ENCODE measurements at regions of chr17 and their contacts with region 1.

Region 1: GRCh38 chr17:47188876-47189731 is at the start of gene CDC27:
- DNase-seq: peak; percentile 100
- ATAC-seq: peak; percentile 90
- H3K4me3 ChIP-seq: peak within 1 kb of the TSS; percentile 74 to 99 (median 88)
- H3K4me3 Mint-ChIP-seq: peak within 1 kb of the TSS; percentile 96
- H3K27ac ChIP-seq: peak within 1 kb of the TSS; percentile 92 to 95
- H3K27ac Mint-ChIP-seq: peak within 1 kb of the TSS; percentile 95
- H3K4me1 ChIP-seq: peaks cover 21 to 30% of the 10 kb centered on the region in 2 donors
- H3K4me1 Mint-ChIP-seq: peaks cover 53% of the 10 kb centered on the region
- H3K27me3 ChIP-seq: no peaks in the 10 kb centered on the region
- H3K27me3 Mint-ChIP-seq: no peaks in the 10 kb centered on the region
- CTCF ChIP-seq: no peak
- total RNA-seq, gene CDC27: 86.5 and 90.7 TPM in 2 replicates

Region 2: DNA sequence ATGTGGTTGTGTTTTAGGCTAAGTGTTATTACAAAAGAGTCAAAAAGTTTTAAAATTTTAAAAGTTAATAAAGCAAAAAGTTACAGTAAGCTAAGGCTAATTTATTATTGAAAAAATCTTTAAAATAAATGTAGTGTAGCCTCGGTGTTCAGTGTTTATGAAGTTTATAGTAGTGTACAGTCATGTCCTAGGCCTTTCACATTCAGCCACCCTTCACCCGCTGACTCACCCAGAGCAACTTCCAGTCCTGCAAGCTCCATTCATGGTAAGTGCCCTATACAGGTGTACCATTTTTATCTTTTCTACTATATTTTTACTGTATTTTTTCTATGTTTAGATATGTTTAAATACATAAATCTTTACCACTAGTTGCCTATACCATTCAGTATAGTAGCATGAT is 111.5 kb before region 1 on chr17:
- CTCF ChIA-PET with region 1: no interaction called
- POLR2A ChIA-PET with region 1: no interaction called
- intact Hi-C with region 1: no loop called
- DNase-seq: no peak
- ATAC-seq: no peak
- H3K4me3 ChIP-seq: no peak overlapping the region
- H3K4me3 Mint-ChIP-seq: no peak overlapping the region
- H3K27ac ChIP-seq: no peak overlapping the region
- H3K27ac Mint-ChIP-seq: no peak overlapping the region
- H3K4me1 ChIP-seq: peaks cover 0 to 3% of the 10 kb centered on the region in 2 donors
- H3K4me1 Mint-ChIP-seq: peaks cover 7% of the 10 kb centered on the region
- H3K27me3 ChIP-seq: no peaks in the 10 kb centered on the region
- H3K27me3 Mint-ChIP-seq: no peaks in the 10 kb centered on the region
- CTCF ChIP-seq: no peak

Region 3: DNA sequence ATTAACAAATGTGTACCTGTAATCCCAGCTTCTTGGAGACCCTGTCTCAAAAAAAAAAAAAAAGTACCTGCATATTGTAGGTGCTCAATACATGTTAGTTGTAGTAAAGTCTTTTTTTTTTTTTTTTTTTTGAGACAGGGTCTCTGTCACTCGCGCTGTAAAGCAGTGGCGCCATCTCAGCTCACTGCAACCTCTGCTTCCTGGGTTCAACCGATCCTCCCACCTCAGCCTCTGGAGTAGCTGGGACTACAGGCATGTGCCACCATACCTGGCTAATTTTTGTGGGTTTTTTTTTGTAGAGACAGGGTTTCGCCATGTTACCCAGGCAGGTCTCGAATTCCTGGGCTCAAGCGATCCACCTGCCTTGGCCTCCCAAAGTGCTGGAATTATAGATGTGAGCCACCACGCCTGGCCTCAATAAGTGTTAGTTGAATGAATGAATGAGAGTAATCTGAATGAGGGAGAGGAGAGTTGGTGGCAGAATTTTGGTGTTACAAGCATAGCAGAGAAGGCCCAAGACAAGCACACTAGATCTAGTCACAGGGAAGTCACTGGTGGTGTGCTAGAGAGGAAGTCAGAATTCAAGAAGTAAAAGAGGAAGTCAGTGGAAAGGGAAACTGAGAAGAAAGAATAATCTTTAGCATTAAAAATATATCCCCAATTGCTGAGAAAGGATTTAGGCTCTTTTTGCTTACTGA is 10.7 kb after region 1 on chr17:
- CTCF ChIA-PET with region 1: interaction called, 10 read pairs
- POLR2A ChIA-PET with region 1: interaction called, 6 read pairs
- intact Hi-C with region 1: loop called (anchors 1 kb)
- DNase-seq: peak; percentile 79
- ATAC-seq: peak; percentile 67
- H3K4me3 ChIP-seq: peak overlapping the region; percentile 21 to 45 (median 41)
- H3K4me3 Mint-ChIP-seq: peak overlapping the region; percentile 80
- H3K27ac ChIP-seq: peak overlapping the region; percentile 82 to 90
- H3K27ac Mint-ChIP-seq: peak overlapping the region; percentile 96
- H3K4me1 ChIP-seq: peaks cover 40 to 46% of the 10 kb centered on the region in 2 donors
- H3K4me1 Mint-ChIP-seq: peaks cover 42% of the 10 kb centered on the region
- H3K27me3 ChIP-seq: no peaks in the 10 kb centered on the region
- H3K27me3 Mint-ChIP-seq: no peaks in the 10 kb centered on the region
- CTCF ChIP-seq: no peak

Region 4: DNA sequence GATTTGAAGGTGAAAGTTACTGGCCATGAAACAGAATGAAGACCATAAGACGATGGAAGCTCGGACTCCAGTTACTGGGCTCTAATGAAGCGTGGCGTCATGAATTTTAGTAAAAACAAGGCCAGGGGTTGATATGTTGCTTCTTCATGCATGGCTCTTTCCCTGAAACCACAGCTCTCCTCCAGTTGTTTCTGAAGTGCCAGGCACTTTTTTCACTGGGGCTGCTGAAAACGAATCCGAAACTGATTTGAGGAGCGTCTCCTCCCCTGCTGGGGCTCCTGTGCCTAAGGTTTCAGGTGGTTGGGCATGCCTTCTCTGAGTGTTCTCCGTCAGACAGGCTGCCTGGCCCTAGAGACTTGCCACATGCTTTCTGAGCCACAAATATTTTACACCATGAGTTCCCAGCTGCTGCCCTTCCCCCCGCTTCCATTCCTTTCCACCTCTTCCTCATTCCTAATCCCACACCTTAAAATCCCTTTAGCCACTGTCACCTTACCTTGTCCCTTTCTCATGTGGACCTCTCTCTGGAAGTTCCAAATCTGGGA is 16.4 kb after region 1 on chr17:
- CTCF ChIA-PET with region 1: interaction called, 10 read pairs
- POLR2A ChIA-PET with region 1: interaction called, 6 read pairs
- intact Hi-C with region 1: loop called (anchors 1 kb)
- DNase-seq: peak; percentile 87
- ATAC-seq: peak; percentile 69
- H3K4me3 ChIP-seq: peak overlapping the region; percentile 30 to 56 (median 45)
- H3K4me3 Mint-ChIP-seq: peak overlapping the region; percentile 87
- H3K27ac ChIP-seq: peak overlapping the region; percentile 96 to 97
- H3K27ac Mint-ChIP-seq: peak overlapping the region; percentile 99
- H3K4me1 ChIP-seq: peaks cover 67 to 74% of the 10 kb centered on the region in 2 donors
- H3K4me1 Mint-ChIP-seq: peaks cover 73% of the 10 kb centered on the region
- H3K27me3 ChIP-seq: no peaks in the 10 kb centered on the region
- H3K27me3 Mint-ChIP-seq: no peaks in the 10 kb centered on the region
- CTCF ChIP-seq: no peak

Region 5: DNA sequence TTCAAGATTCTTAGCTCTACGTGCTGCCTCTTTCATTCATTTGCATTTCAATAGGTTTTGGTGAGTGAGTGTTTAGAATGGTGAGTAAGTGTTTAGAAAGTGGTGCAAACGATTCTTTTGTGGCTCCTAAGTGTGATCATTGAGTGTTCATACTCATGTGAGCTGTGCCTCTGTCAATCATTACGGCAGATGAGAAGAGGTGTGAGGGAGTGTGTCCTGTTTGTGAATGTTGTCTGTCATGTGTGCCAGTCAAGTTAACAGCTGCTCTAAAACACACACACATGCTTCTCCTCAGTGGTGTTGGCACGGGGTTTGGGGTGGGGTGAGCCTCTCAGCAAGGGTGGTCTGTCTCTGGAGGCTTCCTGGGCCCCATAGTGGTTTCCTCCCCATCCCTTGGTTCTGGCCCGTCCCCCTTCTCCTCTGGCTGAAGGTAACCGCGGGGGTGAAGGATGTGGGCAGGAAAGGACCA is 31.5 kb after region 1 on chr17:
- CTCF ChIA-PET with region 1: no interaction called
- POLR2A ChIA-PET with region 1: no interaction called
- intact Hi-C with region 1: loop called (anchors 5 kb)
- DNase-seq: no peak
- ATAC-seq: no peak
- H3K4me3 ChIP-seq: no peak overlapping the region
- H3K4me3 Mint-ChIP-seq: peak overlapping the region; percentile 42
- H3K27ac ChIP-seq: no peak overlapping the region
- H3K27ac Mint-ChIP-seq: peak overlapping the region; percentile 5
- H3K4me1 ChIP-seq: peaks cover 37 to 49% of the 10 kb centered on the region in 2 donors
- H3K4me1 Mint-ChIP-seq: peaks cover 41% of the 10 kb centered on the region
- H3K27me3 ChIP-seq: no peaks in the 10 kb centered on the region
- H3K27me3 Mint-ChIP-seq: no peaks in the 10 kb centered on the region
- CTCF ChIP-seq: no peak